BJ (cell line): ENCODE measurements at regions of chr22 and their contacts with region 1.

Region 1: DNA sequence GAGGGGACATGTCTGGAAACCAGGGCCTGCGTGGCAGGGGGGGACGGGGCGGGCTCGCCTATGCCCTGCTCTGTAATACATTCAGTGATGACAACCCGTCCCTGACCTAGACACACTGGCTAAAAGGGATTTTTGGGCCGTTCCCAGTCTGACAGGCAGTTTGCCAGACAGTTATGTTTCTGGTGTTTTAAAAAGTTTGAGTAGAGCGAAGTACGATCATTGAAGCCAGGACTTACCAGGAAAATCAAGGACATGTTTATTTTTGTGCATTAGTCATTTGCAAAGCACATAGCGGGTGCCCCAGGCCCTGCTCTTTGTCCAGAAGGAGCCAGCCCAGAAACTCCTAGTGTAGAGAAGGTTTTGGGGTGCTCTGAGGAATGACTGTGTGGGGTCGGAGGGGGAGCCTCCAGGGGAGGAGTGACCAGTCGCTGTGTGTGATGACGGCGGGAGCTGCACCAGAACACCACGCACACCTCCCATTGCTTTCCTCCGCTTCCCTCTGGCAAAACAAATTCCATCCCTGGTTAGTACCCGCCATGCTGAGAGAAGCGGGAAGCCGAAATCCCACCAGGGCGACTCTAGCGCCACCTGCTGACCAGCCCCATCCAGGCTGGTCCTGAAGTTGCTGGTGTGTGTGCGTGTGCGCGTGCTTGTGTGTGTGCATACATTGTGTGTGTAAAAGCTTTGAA is 50.8 kb downstream of the FBLN1 start:
- DNase-seq: peak; percentile 54
- H3K4me3 ChIP-seq: no peak overlapping the region
- H3K27me3 ChIP-seq: no peaks in the 10 kb centered on the region
- CTCF ChIP-seq: peak; percentile 95

Region 2: GRCh38 chr22:45263463-45264269 is 289.8 kb before region 1 on chr22:
- CTCF ChIA-PET with region 1: interaction called, 11 read pairs
- POLR2A ChIA-PET with region 1: no interaction called
- DNase-seq: no peak
- H3K4me3 ChIP-seq: no peak overlapping the region
- H3K27me3 ChIP-seq: no peaks in the 10 kb centered on the region
- CTCF ChIP-seq: peak; percentile 93

Region 3: GRCh38 chr22:45376703-45377102 is 176.8 kb before region 1 on chr22:
- CTCF ChIA-PET with region 1: no interaction called
- POLR2A ChIA-PET with region 1: no interaction called
- DNase-seq: no peak
- H3K4me3 ChIP-seq: no peak overlapping the region
- H3K27me3 ChIP-seq: no peaks in the 10 kb centered on the region
- CTCF ChIP-seq: no peak

Region 4: DNA sequence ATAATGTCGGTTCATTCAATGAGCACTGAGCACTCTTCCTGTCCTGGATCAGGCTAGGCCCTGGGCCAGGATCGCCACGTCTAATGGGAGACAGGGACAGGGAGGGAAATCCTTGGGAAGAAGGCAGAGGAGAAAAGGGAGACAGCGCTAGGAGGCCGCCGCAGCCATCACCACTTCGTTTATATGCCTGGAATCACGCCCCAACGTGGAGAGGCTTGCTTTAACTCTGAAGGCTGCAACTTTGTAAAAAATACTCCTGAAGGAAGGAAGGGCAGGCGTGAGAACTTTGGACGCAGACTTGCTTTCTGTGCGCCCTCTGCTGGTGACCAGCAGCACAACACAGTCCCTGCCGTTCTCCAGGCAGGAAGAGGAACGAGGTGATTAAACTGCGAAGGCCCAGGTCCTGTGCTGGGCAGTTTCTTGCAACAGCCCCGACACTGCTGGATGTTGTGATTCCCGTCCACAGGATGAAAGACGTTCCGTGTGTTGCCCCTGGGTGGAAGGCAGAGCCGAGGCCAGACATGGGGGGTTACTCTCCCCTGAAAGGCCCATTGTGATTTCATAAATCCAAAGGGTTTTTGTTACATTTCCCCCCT is 117.9 kb before region 1 on chr22:
- CTCF ChIA-PET with region 1: interaction called, 83 read pairs
- POLR2A ChIA-PET with region 1: no interaction called
- DNase-seq: no peak
- H3K4me3 ChIP-seq: no peak overlapping the region
- H3K27me3 ChIP-seq: no peaks in the 10 kb centered on the region
- CTCF ChIP-seq: peak; percentile 96

Region 5: DNA sequence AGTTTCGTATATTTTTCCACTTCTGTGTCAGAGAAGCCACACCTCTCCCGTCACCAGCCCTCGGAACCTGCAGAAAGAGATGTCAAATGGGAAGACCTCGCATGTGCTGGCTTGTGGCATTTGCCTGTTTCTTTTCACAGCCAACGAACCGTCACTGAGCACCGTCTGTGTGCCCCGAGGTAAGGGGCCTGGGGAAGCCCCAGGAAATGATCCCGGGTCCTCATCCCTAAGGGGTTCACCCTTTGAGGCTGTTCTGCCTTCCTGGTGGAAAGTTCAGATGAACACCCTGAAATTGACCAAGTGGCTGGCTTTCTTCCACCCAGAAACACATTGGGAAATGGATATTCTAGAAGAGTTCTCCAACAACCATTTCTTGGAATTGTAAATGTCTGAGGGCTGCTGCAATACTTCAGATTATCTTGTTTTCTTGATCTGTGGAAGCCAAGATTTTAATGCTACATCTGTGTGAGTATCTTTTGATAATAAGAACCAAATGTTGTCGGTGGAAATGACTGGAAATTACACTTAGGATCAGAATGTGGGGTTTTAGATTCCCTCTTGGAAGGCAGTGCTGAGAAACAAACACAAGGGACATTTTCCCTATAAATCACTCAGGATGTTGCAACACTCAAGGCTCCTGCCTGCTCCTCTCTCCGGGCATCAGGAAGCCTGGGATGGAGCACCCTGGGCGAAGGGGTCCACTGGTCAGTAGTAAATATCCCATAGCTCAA is 102.4 kb before region 1 on chr22:
- CTCF ChIA-PET with region 1: interaction called, 14 read pairs
- POLR2A ChIA-PET with region 1: no interaction called
- DNase-seq: peak; percentile 99
- H3K4me3 ChIP-seq: no peak overlapping the region
- H3K27me3 ChIP-seq: no peaks in the 10 kb centered on the region
- CTCF ChIP-seq: no peak

Region 6: DNA sequence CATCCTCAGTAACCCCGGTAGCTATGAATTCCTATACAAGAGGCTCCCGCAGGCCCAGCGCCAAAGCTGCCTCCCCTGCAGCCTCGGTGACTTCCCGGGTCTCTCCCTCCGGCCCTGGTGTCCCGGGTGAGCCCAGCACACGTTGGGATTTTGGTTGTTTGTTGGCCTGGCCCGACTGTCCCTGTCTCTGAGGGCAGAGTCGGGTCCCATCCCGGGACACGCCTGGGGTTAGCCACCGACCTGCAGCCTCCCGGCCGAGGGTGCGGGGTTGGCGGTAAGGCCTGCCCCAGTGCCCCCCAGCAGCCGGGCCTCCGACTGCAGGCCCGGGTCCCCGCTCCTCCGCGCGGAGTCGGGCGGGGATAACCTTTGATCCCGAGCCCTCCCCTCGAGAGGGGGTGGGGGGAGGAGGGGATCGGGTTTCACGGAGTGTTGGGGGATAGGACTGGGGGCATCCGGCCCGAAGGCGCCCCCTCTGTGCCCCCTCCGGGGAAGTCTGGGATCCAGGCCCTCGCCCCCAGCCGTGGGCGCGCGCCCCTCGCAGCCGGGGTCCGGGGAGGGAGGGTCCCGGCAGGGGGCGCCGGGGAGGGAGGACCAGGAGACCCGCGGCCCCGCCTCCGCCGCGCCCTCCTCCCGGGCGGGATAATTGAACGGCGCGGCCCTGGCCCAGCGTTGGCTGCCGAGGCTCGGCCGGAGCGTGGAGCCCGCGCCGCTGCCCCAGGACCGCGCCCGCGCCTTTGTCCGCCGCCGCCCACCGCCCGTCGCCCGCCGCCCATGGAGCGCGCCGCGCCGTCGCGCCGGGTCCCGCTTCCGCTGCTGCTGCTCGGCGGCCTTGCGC is 51.1 kb before region 1 on chr22 and contains the start of gene FBLN1:
- CTCF ChIA-PET with region 1: interaction called, 46 read pairs
- POLR2A ChIA-PET with region 1: no interaction called
- DNase-seq: no peak
- H3K4me3 ChIP-seq: peak within 1 kb of the TSS; percentile 99
- H3K27me3 ChIP-seq: no peaks in the 10 kb centered on the region
- CTCF ChIP-seq: peak; percentile 22; the same call in 1 of the 2 replicates
- polyA plus RNA-seq, gene FBLN1: 681 and 1,033 TPM in 2 replicates